ENCODE measurements at regions of chr17 and their contacts with region 1.

Region 1: DNA sequence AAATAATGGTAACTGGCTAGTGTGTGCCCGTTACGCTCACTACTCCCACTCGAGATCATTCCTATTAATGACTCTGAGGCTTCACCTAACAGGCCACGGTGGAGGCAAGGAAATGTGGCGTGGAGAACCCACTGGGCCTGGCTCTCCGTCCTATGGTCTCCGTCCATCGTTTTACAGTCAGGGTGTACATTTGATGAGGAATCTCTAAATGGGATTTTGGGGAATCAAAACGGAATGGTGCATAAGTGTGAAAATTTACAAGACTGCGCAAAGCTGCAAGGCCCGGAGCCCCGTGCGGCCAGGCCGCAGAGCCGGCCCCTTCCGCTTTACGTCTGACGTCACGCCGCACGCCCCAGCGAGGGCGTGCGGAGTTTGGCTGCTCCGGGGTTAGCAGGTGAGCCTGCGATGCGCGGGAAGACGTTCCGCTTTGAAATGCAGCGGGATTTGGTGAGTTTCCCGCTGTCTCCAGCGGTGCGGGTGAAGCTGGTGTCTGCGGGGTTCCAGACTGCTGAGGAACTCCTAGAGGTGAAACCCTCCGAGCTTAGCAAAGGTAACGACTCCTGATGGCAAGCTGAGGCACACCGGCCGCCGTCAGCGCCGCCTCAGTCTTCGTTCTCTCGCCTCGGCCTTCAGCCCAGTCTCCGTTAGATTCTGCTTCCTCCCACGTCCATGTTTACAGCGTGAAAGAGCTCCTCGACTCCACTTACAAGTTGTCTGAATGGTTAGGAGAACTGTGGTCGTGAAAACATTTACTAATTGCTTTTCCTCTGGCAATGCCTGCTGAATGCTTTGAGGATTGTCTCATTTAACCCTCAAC is at the start of gene RAD51C:
- DNase-seq: peak; percentile 93
- H3K4me3 Mint-ChIP-seq: peak within 1 kb of the TSS; percentile 99
- H3K27ac Mint-ChIP-seq: peak within 1 kb of the TSS; percentile 96
- H3K4me1 Mint-ChIP-seq: peaks cover 25% of the 10 kb centered on the region
- H3K27me3 Mint-ChIP-seq: no peaks in the 10 kb centered on the region
- total RNA-seq, gene RAD51C: 64.0 to 66.0 TPM

Region 2: DNA sequence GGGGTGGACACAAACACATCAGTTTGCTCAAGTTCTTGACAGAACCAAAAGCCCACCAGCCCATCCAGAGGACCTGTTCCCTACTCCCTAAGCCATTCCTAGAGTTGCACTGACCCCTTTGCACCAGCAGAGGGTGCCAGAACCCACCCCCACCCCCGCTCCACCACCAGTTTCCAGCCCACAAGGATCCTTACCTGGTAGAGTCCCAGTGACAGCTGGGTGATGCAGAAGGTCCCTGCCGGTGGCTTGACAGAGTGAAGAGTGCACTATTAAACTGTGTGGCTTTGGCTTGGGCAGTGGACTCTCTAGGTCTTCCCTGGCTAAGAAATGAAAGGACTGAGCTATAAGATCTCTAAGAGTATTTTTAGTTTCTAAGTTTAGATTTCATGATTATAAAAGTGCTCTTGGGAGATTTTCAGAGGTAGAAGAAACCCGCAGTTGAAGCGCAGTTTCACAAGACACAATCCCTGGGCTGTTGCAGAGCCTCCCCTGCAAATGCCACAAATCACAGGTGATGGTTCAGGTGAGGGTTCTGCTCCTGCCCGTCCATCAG is 104.7 kb before region 1 on chr17:
- CTCF ChIA-PET with region 1: no interaction called
- POLR2A ChIA-PET with region 1: no interaction called
- intact Hi-C with region 1: loop called (anchors 10 kb)
- DNase-seq: peak; percentile 79
- H3K4me3 Mint-ChIP-seq: no peak overlapping the region
- H3K27ac Mint-ChIP-seq: no peak overlapping the region
- H3K4me1 Mint-ChIP-seq: no peaks in the 10 kb centered on the region
- H3K27me3 Mint-ChIP-seq: no peaks in the 10 kb centered on the region

Region 3: GRCh38 chr17:58703137-58703972 is 10.9 kb after region 1 on chr17:
- CTCF ChIA-PET with region 1: interaction called, 3 read pairs
- POLR2A ChIA-PET with region 1: interaction called, 11 read pairs
- intact Hi-C with region 1: loop called (anchors 1 kb)
- DNase-seq: peak; percentile 36
- H3K4me3 Mint-ChIP-seq: no peak overlapping the region
- H3K27ac Mint-ChIP-seq: peak overlapping the region; percentile 78
- H3K4me1 Mint-ChIP-seq: peaks cover 30% of the 10 kb centered on the region
- H3K27me3 Mint-ChIP-seq: no peaks in the 10 kb centered on the region

Region 4: DNA sequence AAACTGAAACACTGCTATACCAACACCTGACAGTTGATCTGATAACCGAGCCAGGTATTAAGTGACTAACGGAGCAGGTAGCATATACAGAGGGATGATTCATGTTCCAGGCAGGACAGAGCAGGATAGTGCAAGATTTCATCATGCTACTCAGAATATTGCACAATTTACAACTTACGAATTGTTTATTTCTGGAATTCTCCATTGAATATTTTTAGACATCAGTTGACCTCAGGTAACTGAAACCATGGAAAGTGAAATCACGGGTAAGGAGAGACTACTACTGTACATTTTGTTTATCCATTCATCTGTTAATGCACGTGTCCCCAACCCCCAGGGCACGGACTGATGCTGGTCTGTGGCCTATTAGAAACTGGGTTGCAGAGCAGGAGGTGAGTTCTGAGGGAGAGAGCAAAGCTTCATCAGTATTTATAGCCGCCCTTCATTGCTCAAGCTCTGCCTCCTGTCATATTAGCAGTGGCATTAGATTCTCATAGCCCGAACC is 48.7 kb after region 1 on chr17:
- CTCF ChIA-PET with region 1: no interaction called
- POLR2A ChIA-PET with region 1: no interaction called
- intact Hi-C with region 1: no loop called
- DNase-seq: no peak
- H3K4me3 Mint-ChIP-seq: no peak overlapping the region
- H3K27ac Mint-ChIP-seq: no peak overlapping the region
- H3K4me1 Mint-ChIP-seq: no peaks in the 10 kb centered on the region
- H3K27me3 Mint-ChIP-seq: no peaks in the 10 kb centered on the region

Measured in activated CD4-positive, alpha-beta memory T cell treated with anti-CD3 and anti-CD28 coated beads for 36 hours (primary cell).